HCT116 (cell line): ENCODE measurements at regions of chr3 and their contacts with region 1.

Region 1: GRCh38 chr3:98901392-98902350 is at the start of gene DCBLD2:
- DNase-seq: peak; percentile 96
- ATAC-seq: peak; percentile 91
- H3K4me3 ChIP-seq: peak within 1 kb of the TSS; percentile 82 to 89
- H3K27ac ChIP-seq: peak within 1 kb of the TSS; percentile 99
- H3K4me1 ChIP-seq: peaks cover 42 to 62% of the 10 kb centered on the region in 2 experiments
- H3K27me3 ChIP-seq: no peaks in the 10 kb centered on the region
- CTCF ChIP-seq: no peak
- POLR2A ChIP-seq: peak; percentile 95
- RAD21 ChIP-seq: peak; percentile 20; the same call in 1 of the 2 replicates
- total RNA-seq, gene DCBLD2: 532 TPM

Region 2: GRCh38 chr3:98884675-98885371 is 16.8 kb before region 1 on chr3:
- CTCF ChIA-PET with region 1: no interaction called
- POLR2A ChIA-PET with region 1: interaction called, 11 read pairs
- RAD21 ChIA-PET with region 1: no interaction called
- intact Hi-C with region 1: no loop called
- DNase-seq: no peak
- ATAC-seq: peak; percentile 33; the same call in 1 of the 2 replicates
- H3K4me3 ChIP-seq: no peak overlapping the region
- H3K27ac ChIP-seq: peak overlapping the region; percentile 99; the same call in 1 of the 2 replicates
- H3K4me1 ChIP-seq: peaks cover 54 to 90% of the 10 kb centered on the region in 2 experiments
- H3K27me3 ChIP-seq: no peaks in the 10 kb centered on the region
- CTCF ChIP-seq: no peak
- POLR2A ChIP-seq: no peak
- RAD21 ChIP-seq: no peak

Region 3: DNA sequence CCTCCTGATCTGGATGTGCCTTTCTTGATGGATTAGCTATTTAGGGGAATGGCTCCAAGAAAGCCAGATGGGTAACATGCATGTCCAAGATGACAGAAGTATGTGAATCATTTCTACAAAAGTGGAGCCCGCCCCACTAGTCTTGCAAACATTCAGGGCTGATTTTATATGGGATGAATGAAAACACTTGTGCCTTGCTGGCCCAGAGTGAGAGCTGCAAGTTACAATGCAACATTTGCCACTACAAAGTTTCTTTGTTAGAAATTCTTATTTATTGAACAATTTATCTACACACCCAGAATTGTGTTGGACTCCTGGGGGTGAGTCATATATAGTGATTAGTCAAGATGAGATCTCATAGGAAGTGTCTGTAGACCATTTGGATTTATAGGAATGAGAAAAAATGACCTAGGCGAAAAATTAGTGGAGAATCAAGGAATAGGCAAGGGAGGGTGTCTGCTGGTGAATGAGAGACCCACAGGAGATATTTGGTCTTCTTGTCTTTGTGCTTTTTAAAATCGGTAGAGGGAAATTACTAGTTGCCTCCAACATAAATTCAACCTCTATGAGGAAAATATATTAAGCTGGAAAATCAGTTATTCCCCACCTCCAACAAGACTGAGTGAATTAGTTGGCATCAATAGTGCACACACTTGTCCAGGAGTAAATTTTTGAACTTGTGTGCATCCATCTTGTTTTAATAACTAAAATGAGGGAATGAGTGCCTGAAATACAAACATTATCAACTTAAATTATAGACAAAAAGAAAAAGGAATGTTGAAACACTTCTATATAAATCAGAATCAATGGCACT is 53.3 kb after region 1 on chr3:
- CTCF ChIA-PET with region 1: interaction called, 3 read pairs
- POLR2A ChIA-PET with region 1: interaction called, 58 read pairs
- RAD21 ChIA-PET with region 1: no interaction called
- intact Hi-C with region 1: no loop called
- DNase-seq: peak; percentile 44
- ATAC-seq: peak; percentile 63
- H3K4me3 ChIP-seq: 0 out of 4 replicates have a peak overlapping the region, but pooled peaks of 1 of the 2 experiments have one; percentile 11
- H3K27ac ChIP-seq: peak overlapping the region; percentile 81
- H3K4me1 ChIP-seq: peaks cover 80 to 85% of the 10 kb centered on the region in 2 experiments
- H3K27me3 ChIP-seq: no peaks in the 10 kb centered on the region
- CTCF ChIP-seq: no peak
- POLR2A ChIP-seq: no peak
- RAD21 ChIP-seq: 0 out of 2 replicates have a peak, but pooled peaks have one; percentile 3

Region 4: DNA sequence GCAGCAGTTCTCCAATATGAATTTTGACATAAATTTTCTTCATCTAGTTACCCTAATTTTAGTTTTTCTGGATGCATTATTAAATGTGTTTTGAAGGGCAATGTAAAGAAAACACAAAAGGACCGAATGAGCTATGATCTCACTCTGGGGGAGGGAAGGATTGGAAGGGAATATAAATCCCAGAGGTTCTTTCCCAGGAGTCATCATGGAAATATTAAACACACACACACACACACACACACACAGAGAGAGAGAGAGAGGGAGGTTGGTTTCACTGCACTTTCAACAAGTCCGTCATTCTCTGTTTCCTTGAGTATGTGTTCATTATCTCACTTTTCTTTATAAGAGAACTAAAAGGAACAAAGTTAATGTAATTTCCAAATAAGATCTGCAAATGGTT is 70.5 kb after region 1 on chr3:
- CTCF ChIA-PET with region 1: interaction called, 4 read pairs
- POLR2A ChIA-PET with region 1: interaction called, 310 read pairs
- RAD21 ChIA-PET with region 1: interaction called in 1 of 2 experiments, 3 read pairs
- intact Hi-C with region 1: loop called (anchors 2 kb)
- DNase-seq: peak; percentile 78
- ATAC-seq: no peak; the same call in 1 of the 2 replicates
- H3K4me3 ChIP-seq: no peak overlapping the region
- H3K27ac ChIP-seq: peak overlapping the region; percentile 97
- H3K4me1 ChIP-seq: peaks cover 73 to 86% of the 10 kb centered on the region in 2 experiments
- H3K27me3 ChIP-seq: no peaks in the 10 kb centered on the region
- CTCF ChIP-seq: no peak
- POLR2A ChIP-seq: no peak
- RAD21 ChIP-seq: no peak

Region 5: DNA sequence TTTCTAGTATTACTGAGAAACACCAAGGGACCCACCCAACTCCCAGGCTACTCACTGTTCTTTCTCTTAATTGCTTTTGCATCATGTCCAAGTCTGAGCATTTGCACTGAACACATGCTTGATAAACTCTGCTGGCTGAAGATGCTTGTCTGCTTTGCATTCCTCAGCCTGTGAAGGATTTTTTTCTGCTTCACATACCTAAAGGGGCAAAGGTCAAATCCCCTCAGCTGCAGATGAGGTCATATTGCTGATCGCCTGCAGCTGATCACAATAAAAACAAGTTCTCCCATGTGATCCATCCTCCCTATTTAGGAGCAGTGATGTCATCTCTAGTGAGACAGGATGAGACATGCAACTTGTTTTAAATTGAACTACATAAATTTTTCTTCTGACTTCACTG is 84.4 kb after region 1 on chr3:
- CTCF ChIA-PET with region 1: interaction called, 4 read pairs
- POLR2A ChIA-PET with region 1: interaction called, 70 read pairs
- RAD21 ChIA-PET with region 1: interaction called in 1 of 2 experiments, 3 read pairs
- intact Hi-C with region 1: no loop called
- DNase-seq: peak; percentile 40
- ATAC-seq: peak; percentile 52
- H3K4me3 ChIP-seq: peak overlapping the region in 1 of 2 experiments; percentile 19; a peak in 2 of 4 replicates
- H3K27ac ChIP-seq: peak overlapping the region; percentile 88
- H3K4me1 ChIP-seq: peaks cover 59 to 65% of the 10 kb centered on the region in 2 experiments
- H3K27me3 ChIP-seq: no peaks in the 10 kb centered on the region
- CTCF ChIP-seq: no peak
- POLR2A ChIP-seq: no peak
- RAD21 ChIP-seq: no peak